Activated T-helper 1 cell treated with anti-CD3 and anti-CD28 coated beads, Interleukin-12 subunit alpha, Interleukin-12 subunit beta, Interleukin-2, Interleukin-4 antibody, amounts not matched to agents 30 ng/mL and 10 ng/mL and 1 ng/mL, durations not matched to agents 14 hours and 24 hours and 36 hours (primary cell): ENCODE measurements at regions of chr1 and their contacts with region 1.

Region 1: GRCh38 chr1:20151906-20152598 is 12.9 kb downstream of the PLA2G2F start:
- DNase-seq: peak; percentile 69
- H3K4me3 Mint-ChIP-seq: peak overlapping the region; percentile 73
- H3K27ac Mint-ChIP-seq: peak overlapping the region; percentile 20
- H3K4me1 Mint-ChIP-seq: peaks cover 17% of the 10 kb centered on the region
- H3K27me3 Mint-ChIP-seq: no peaks in the 10 kb centered on the region

Region 2: DNA sequence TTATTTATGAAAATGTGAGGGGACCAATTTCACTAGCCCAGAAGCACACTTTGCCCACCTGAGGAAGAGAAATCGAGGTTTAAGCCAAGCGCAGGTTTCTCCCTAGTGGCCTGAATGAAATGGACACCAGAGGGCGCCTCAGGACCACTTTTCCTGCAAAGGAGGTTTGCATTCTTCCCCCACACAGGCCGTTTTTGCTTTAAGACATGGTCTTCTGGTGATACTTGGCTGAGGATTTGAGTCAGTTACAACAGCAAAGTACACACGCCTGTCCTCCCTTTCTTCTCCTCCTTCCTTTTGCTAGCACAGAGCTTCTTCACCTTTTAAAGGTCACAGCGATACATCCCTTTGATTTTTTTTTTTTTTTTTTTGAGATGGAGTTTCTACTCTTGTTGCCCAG is 234.0 kb before region 1 on chr1:
- intact Hi-C with region 1: loop called (anchors 1 kb)
- DNase-seq: peak; percentile 57
- H3K4me3 Mint-ChIP-seq: no peak overlapping the region
- H3K27ac Mint-ChIP-seq: no peak overlapping the region
- H3K4me1 Mint-ChIP-seq: peaks cover 6% of the 10 kb centered on the region
- H3K27me3 Mint-ChIP-seq: no peaks in the 10 kb centered on the region

Region 3: GRCh38 chr1:19974822-19975416 is 177.1 kb before region 1 on chr1:
- intact Hi-C with region 1: loop called (anchors 1 kb)
- DNase-seq: no peak
- H3K4me3 Mint-ChIP-seq: no peak overlapping the region
- H3K27ac Mint-ChIP-seq: no peak overlapping the region
- H3K4me1 Mint-ChIP-seq: no peaks in the 10 kb centered on the region
- H3K27me3 Mint-ChIP-seq: peaks cover 14% of the 10 kb centered on the region

Region 4: DNA sequence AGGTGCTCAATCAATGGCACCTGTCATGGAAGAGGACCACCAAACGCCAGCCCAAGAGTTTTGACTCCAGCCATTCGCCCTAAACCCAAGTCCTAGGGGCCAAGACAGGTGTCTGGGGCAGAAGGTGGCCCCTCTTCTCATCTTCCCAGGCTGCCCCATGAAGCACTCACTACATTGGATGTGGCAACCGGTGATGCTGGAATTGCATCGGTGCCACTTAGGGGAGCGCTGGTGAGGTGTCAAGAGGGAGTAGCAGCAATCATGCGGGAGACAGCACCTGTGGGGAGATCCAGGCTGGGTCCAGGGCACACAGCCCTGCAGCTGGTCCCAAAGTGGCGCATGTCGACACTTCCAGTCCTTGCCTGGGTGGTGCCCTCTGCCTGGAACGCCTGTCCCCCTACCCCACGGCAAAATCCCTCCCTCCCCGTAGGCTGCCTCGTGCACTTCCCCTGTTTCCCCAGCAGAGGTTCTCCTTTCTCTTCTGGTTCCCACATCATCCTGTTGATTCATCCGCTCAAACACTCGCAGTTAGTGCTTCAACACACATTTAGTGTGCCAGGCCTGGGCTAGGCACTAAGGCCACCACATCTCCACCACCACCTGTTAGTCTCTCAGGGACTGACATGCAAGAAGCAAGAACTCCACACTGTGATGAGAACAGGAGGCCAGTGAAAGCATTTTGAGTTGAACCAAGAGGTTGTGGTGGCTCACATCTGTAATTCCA is 51.3 kb before region 1 on chr1:
- intact Hi-C with region 1: loop called (anchors 1 kb)
- DNase-seq: peak; percentile 1
- H3K4me3 Mint-ChIP-seq: no peak overlapping the region
- H3K27ac Mint-ChIP-seq: no peak overlapping the region
- H3K4me1 Mint-ChIP-seq: no peaks in the 10 kb centered on the region
- H3K27me3 Mint-ChIP-seq: peaks cover 4% of the 10 kb centered on the region

Region 5: DNA sequence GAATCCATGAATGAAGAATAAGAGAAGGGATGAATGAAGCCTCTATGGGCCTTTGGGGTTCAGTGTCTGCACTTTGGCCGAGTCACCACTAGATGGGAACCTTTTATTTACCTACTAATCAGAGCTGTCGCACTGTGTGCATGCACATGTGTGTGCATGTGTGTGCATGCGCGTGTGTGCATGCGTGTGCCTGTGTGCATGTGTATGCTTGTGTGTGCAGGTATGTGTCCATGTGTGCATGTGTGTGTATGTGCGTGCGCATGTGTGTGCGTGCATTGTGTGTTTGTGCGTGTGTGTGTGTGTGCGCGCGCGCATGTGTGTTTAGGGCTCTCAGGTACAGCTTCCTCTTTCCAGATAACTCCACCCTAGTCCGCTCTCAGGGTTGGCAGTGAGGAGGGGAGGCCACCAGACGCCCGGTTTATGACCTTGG is 13.5 kb after region 1 on chr1:
- intact Hi-C with region 1: no loop called
- DNase-seq: no peak
- H3K4me3 Mint-ChIP-seq: no peak overlapping the region
- H3K27ac Mint-ChIP-seq: no peak overlapping the region
- H3K4me1 Mint-ChIP-seq: peaks cover 11% of the 10 kb centered on the region
- H3K27me3 Mint-ChIP-seq: peaks cover 4% of the 10 kb centered on the region